GM12878 (cell line): ENCODE measurements at regions of chr6 and their contacts with region 1.

Region 1: DNA sequence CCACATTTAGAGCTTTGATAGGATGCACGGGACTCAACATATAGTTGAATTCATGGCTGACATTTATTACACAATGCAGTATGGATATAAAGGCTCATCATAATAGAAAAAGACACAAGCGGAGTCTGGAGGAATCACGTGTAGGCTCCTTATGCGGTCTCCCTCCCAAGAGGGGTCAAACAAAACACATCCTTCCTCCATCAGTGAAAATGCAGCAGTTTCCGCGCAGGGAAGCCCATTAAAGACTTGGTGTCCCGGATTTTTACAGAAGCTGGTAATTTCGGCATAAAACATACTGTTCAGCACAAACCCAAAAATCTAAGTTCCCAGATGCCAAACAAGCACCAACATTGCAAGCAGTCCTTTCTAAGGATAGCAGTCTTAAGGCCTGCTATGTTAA is 1.1 kb downstream of the USP45 start:
- DNase-seq: no peak
- ATAC-seq: no peak
- H3K4me3 ChIP-seq: peak overlapping the region; percentile 76
- H3K27ac ChIP-seq: peak overlapping the region; percentile 77
- H3K4me1 ChIP-seq: peaks cover 9% of the 10 kb centered on the region; the same call in 1 of the 2 replicates
- H3K27me3 ChIP-seq: no peaks in the 10 kb centered on the region
- CTCF ChIP-seq: no peak
- EP300 ChIP-seq: no peak
- POLR2A ChIP-seq: no peak
- RAD21 ChIP-seq: no peak

Region 2: GRCh38 chr6:99485395-99485773 is 28.7 kb before region 1 on chr6:
- CTCF ChIA-PET with region 1: interaction called, 3 read pairs
- POLR2A ChIA-PET with region 1: interaction called, 15 read pairs
- RAD21 ChIA-PET with region 1: interaction called, 15 read pairs
- SMC1A ChIA-PET with region 1: interaction called, 30 read pairs
- in situ Hi-C with region 1: no loop called
- intact Hi-C with region 1: no loop called
- DNase-seq: no peak
- ATAC-seq: peak; percentile 58
- H3K4me3 ChIP-seq: no peak overlapping the region
- H3K27ac ChIP-seq: peak overlapping the region; percentile 68
- H3K4me1 ChIP-seq: peaks cover 14% of the 10 kb centered on the region
- H3K27me3 ChIP-seq: no peaks in the 10 kb centered on the region
- CTCF ChIP-seq: no peak
- EP300 ChIP-seq: no peak
- POLR2A ChIP-seq: no peak
- RAD21 ChIP-seq: no peak

Region 3: DNA sequence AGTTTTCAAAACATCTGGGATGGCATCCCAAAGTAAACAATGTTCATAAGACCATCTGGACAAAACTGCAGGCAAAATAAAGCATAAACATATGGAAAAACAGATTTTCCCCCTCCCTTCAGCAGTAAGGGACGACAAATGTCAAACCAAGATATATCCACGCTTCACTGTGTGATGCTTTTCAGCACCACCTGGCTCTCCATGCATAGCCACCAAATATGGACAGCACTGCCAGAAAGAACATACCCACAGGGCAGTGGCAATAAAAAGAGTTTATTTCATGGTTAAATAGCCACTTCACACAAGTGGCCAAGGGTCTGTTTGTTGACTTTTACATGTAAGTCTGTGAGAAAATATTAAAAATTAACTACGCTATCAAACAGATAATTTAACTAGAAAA is 22.0 kb before region 1 on chr6:
- CTCF ChIA-PET with region 1: interaction called, 6 read pairs
- POLR2A ChIA-PET with region 1: interaction called, 15 read pairs
- RAD21 ChIA-PET with region 1: interaction called, 4 read pairs
- SMC1A ChIA-PET with region 1: interaction called, 30 read pairs
- in situ Hi-C with region 1: no loop called
- intact Hi-C with region 1: no loop called
- DNase-seq: no peak
- ATAC-seq: no peak
- H3K4me3 ChIP-seq: no peak overlapping the region
- H3K27ac ChIP-seq: no peak overlapping the region
- H3K4me1 ChIP-seq: no peaks in the 10 kb centered on the region
- H3K27me3 ChIP-seq: no peaks in the 10 kb centered on the region
- CTCF ChIP-seq: no peak
- EP300 ChIP-seq: no peak
- POLR2A ChIP-seq: no peak
- RAD21 ChIP-seq: no peak

Region 4: GRCh38 chr6:99739526-99739925 is 225.4 kb after region 1 on chr6:
- CTCF ChIA-PET with region 1: no interaction called
- POLR2A ChIA-PET with region 1: no interaction called
- RAD21 ChIA-PET with region 1: no interaction called
- SMC1A ChIA-PET with region 1: no interaction called
- in situ Hi-C with region 1: no loop called
- intact Hi-C with region 1: no loop called
- DNase-seq: no peak
- ATAC-seq: no peak
- H3K4me3 ChIP-seq: no peak overlapping the region
- H3K27ac ChIP-seq: no peak overlapping the region
- H3K4me1 ChIP-seq: no peaks in the 10 kb centered on the region
- H3K27me3 ChIP-seq: no peaks in the 10 kb centered on the region
- CTCF ChIP-seq: no peak
- EP300 ChIP-seq: no peak
- POLR2A ChIP-seq: no peak
- RAD21 ChIP-seq: no peak